ENCODE measurements at regions of chr12 and their contacts with region 1.

Region 1: DNA sequence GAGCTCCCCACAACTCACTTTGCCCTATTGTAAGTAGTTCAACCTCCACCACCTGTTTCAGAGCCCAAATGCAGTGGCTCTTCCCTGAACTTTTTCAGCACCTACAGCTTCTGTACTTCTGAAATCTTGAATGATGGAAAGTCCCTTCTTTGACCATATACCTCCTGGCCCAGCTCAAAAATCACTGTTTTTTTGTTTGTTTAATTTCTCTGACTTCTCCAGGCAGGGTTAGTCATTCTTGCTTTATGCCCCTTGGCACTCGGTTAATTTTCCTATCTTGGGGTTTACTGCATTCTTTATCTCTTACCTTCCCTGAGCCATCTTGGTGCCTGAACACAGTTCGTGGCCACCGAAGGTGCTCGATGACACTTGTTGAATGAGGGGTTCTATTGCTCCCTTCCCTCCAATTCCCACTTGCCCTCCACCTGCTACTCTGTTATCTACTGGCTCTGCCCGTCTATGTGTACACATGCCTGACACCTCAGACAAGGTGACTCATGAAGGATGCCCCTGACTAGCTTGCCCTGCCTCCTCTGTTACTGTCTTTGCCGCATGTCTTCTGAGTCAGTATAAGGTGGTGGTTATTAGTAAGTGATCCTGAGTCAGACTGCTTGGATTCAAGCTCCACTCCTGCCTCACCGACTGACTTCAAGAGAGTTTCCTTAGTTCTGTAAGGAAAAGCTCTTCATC is 4.4 kb downstream of the AMHR2 start:
- DNase-seq: peak in 2 of 4 experiments; percentile 15 to 38
- ATAC-seq: no peak
- H3K4me3 ChIP-seq: no peak overlapping the region
- H3K27ac ChIP-seq: no peak overlapping the region
- H3K4me1 ChIP-seq: peaks cover 30 to 31% of the 10 kb centered on the region in 2 experiments
- H3K27me3 ChIP-seq: no peaks in the 10 kb centered on the region
- CTCF ChIP-seq: no peak
- EP300 ChIP-seq: no peak
- POLR2A ChIP-seq: no peak
- RAD21 ChIP-seq: no peak

Region 2: GRCh38 chr12:53352331-53353256 is 75.5 kb before region 1 on chr12:
- CTCF ChIA-PET with region 1: interaction called, 3 read pairs
- POLR2A ChIA-PET with region 1: interaction called, 9 read pairs
- in situ Hi-C with region 1: loop called (anchors 5 kb)
- intact Hi-C with region 1: no loop called
- DNase-seq: peak; percentile 71 to 93 (median 74)
- ATAC-seq: peak; percentile 95
- H3K4me3 ChIP-seq: no peak overlapping the region
- H3K27ac ChIP-seq: no peak overlapping the region
- H3K4me1 ChIP-seq: peaks cover 12 to 17% of the 10 kb centered on the region in 2 experiments
- H3K27me3 ChIP-seq: no peaks in the 10 kb centered on the region
- CTCF ChIP-seq: peak; percentile 91 to 96 (median 92)
- EP300 ChIP-seq: no peak
- POLR2A ChIP-seq: no peak
- RAD21 ChIP-seq: peak; percentile 98 to 99

Region 3: DNA sequence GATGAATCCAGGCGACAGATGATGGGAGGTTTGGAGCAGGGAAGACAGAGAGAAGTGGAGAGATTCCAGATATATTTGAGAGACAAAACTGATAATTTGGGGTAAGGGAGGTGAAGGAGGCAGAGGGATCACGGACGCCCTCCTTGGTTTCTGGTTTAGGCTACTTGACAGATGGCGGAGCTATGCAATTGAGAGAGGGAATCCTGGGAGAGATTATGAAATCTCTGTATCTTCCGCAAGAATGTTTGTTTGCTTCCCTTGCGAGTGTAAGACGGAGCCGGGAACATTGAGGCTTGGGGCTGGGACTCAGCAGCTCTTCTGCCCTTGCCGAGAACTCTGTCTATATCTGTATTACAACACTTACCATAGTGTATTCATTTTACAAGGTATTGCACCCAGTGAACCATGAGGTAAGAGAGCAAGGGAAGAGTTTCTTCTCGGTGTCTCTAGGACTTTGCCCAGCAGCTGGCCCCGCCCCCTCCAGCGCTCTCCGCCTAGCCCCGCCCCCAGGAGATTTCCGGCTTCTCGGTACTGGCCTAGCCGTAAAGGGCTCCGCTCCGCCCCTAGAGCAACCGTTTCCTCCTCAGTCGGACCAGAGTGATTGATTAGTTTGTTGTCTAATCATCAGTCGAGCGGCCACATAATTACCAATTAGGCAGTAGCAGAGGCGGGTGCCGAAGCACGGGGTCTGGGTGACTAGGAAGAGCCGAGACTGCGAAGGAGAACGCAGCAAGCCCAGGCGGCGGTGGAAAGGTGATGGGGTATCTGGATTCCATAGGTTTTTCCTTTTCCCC is 13.2 kb after region 1 on chr12 and contains the start of gene PRR13:
- CTCF ChIA-PET with region 1: no interaction called
- POLR2A ChIA-PET with region 1: interaction called, 10 read pairs
- in situ Hi-C with region 1: no loop called
- intact Hi-C with region 1: no loop called
- DNase-seq: peak; percentile 91 to 99 (median 96)
- ATAC-seq: peak; percentile 97
- H3K4me3 ChIP-seq: peak within 1 kb of the TSS; percentile 57
- H3K27ac ChIP-seq: peak within 1 kb of the TSS; percentile 84
- H3K4me1 ChIP-seq: peaks cover 20 to 41% of the 10 kb centered on the region in 2 experiments; a peak in 4 of 5 replicates
- H3K27me3 ChIP-seq: no peaks in the 10 kb centered on the region
- CTCF ChIP-seq: no peak
- EP300 ChIP-seq: peak; percentile 33
- POLR2A ChIP-seq: peak; percentile 98
- RAD21 ChIP-seq: no peak
- polyA plus RNA-seq, gene PRR13: 570 to 835 TPM

Region 4: DNA sequence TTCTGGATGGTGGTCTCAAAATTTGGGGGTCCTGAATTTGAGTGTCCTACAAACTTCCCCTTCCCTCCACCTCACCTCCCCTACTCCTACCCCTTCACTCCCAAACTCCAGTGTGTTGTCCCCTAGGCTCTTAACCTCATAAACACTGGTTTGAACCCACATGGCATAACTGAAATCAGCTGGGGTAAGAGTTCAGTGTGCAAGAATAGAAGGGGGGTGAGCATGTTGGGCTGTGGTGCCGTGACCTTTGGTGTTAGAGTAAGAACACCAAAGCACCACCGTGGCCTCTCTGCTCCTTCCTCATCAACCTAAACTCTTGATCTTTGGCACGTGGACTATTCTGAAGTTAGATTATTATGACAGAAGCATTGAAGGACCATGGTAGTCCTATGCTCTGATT is 34.9 kb after region 1 on chr12:
- CTCF ChIA-PET with region 1: no interaction called
- POLR2A ChIA-PET with region 1: no interaction called
- in situ Hi-C with region 1: no loop called
- intact Hi-C with region 1: no loop called
- DNase-seq: no peak
- ATAC-seq: no peak
- H3K4me3 ChIP-seq: no peak overlapping the region
- H3K27ac ChIP-seq: no peak overlapping the region
- H3K4me1 ChIP-seq: peaks cover 0 to 3% of the 10 kb centered on the region in 2 experiments; a peak in 1 of 5 replicates
- H3K27me3 ChIP-seq: no peaks in the 10 kb centered on the region
- CTCF ChIP-seq: no peak
- EP300 ChIP-seq: no peak
- POLR2A ChIP-seq: 0 out of 2 replicates have a peak, but pooled peaks have one; percentile 28
- RAD21 ChIP-seq: no peak